ENCODE measurements at regions of chr6 and their contacts with region 1.

Region 1: DNA sequence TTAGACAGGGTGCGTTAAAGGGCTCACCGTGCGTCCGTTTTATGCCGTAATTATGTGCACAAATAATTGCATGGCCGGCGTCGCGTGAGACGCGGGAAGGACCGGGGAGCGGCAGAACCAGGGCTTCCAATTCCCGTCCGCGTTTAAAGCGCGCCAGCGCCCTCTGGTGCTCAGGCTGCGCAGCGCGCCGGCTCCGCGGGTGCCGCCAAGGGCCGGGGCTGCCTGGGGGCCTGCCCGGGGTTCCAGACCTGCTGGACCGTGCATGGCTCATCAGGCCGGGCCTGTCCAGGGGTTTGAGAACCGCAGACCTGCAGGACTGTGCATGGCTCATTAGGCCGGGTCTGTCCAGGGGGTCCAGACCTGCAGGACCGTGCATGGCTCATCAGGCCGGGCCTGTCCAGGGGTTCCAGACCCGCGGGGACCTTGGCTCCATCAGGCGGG is 369.0 kb downstream of the THBS2 start:
- DNase-seq: peak; percentile 84

Region 2: GRCh38 chr6:168451805-168452517 is 432.7 kb before region 1 on chr6:
- intact Hi-C with region 1: no loop called
- DNase-seq: no peak

Region 3: GRCh38 chr6:168616816-168617765 is 267.6 kb before region 1 on chr6:
- intact Hi-C with region 1: loop called (anchors 2 kb)
- DNase-seq: no peak

Region 4: DNA sequence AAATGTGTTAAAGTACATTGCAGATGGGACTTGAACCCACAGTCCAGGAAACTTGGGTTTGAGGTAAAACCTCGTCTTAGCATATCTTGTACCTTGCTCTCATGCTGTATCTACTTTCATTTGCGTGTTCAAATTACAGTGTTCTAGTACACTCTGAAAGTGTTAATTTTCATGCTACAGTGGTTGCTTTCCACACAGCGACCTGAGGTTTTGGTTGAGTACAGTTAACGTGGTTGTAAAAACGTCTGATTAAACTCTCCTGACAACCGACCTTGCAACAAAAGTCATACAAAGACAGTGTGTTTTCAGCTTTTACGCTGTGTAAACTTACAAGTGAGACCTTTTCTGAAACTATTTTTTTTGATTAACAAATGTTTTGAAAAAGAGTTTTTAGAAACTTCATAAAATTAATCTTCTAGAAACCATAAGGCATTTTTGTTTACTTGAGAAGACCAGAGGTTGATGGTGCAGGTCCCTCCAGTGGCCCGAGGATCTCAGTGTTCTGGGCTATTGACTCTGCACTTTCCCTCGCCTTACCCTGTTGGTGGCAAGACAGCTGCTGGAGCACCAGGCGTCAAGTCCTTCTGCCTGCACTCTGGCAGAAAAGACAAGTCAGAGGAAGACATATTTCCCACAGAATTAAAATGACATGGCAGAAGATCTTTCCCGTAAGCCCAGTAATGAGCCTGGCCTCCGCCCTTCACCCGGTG is 35.0 kb after region 1 on chr6:
- intact Hi-C with region 1: no loop called
- DNase-seq: no peak

Region 5: GRCh38 chr6:168956884-168957730 is 72.4 kb after region 1 on chr6:
- intact Hi-C with region 1: no loop called
- DNase-seq: no peak

Measured in cardiac septum (tissue), 1 donor.